ENCODE measurements at regions of chr19 and their contacts with region 1.

Region 1: GRCh38 chr19:33569821-33570220 is 48.2 kb upstream of the PEPD start:
- DNase-seq: no peak
- H3K4me3 ChIP-seq: no peak overlapping the region
- H3K27me3 ChIP-seq: no peaks in the 10 kb centered on the region
- CTCF ChIP-seq: no peak

Region 2: DNA sequence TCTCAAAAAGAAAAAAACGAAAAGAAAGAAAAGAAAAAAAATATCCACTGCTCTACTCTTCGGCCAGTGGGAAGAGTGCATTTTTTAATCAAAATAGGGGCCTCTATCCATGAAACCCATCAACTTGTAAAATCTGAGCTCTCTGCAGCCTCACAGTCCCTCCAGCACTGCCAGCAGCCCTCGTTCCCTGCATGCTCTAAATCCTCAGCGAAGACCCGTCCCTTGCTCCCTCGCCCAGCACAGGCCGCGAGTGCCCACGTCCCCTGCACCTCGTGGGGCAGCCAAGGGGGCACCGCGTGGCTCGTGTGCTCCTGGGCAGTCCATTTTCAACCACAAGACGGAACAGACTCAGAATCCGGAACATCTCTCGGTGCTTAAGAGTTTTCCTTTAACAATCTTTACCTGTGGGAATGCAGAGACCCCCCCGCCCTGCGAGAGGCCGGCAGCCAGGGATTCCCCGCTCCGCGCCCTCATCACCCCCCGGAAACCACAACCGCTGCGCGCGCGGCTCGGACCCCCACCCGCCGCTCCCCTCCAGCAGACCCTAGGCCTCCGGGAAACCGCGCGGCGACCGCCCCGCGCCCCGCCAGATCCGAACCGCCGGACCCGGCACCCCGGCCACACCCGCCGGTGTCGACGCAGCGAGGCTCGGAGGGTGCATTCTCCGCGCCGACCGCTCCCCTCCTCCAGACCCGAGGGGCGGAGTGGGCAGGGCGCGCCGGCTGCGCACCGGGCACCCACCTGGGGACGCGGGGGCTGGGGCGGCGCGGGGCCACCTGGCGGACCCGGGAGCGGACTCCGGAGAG is 895.5 kb before region 1 on chr19:
- CTCF ChIA-PET with region 1: no interaction called
- POLR2A ChIA-PET with region 1: interaction called, 10 read pairs
- DNase-seq: no peak
- H3K4me3 ChIP-seq: peak overlapping the region; percentile 96
- H3K27me3 ChIP-seq: peaks cover 18% of the 10 kb centered on the region
- CTCF ChIP-seq: no peak

Measured in BJ (cell line).